Lower leg skin (tissue), 4 donors: ENCODE measurements at regions of chr11 and their contacts with region 1.

Region 1: GRCh38 chr11:44556735-44557409 is 8.6 kb upstream of the CD82 start:
- DNase-seq: peak; percentile 62 to 92
- H3K4me3 ChIP-seq: no peak overlapping the region
- CTCF ChIP-seq: peak in 1 of 3 donors; percentile 72
- POLR2A ChIP-seq: no peak

Region 2: DNA sequence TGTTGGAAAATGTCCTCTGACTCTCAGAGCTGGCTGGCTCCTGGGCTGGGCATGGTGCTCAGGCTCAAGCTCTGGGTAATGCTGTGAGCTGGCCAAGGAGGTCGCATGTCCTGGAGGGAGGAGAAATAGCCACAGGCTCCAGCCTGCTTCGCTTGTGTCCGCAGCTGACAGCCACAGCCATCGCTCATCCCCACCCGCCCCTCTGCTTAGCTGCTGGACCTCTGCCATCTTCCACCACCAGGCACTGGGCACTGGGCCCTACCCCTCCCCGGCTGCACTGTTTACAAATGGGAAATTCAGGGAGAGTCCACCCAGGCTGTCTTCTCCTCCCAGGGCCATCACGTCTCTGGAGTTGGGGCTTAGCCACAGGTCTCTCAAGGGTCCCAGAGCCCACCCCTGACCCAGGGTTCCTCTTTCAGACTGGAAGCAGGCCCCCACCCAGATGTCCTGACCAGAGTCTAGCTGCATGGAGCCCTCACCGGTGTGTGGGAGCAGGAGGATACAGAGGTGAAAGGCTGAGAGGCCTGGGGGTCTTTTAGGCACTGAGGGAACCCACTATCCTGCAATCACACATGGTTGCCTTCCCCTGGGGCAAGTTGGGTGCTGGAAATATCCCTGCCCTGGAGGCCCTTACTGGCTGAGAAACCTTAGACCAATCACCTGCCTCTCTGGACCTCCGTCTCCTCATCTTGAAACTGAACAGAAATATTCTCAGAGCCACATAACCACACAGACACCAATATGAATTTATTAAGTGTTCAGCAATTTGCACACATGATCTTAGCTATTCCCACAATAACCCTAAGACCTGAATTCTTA is 71.2 kb after region 1 on chr11:
- intact Hi-C with region 1: no loop called
- DNase-seq: peak; percentile 47 to 91
- H3K4me3 ChIP-seq: no peak overlapping the region
- CTCF ChIP-seq: no peak
- POLR2A ChIP-seq: no peak

Region 3: DNA sequence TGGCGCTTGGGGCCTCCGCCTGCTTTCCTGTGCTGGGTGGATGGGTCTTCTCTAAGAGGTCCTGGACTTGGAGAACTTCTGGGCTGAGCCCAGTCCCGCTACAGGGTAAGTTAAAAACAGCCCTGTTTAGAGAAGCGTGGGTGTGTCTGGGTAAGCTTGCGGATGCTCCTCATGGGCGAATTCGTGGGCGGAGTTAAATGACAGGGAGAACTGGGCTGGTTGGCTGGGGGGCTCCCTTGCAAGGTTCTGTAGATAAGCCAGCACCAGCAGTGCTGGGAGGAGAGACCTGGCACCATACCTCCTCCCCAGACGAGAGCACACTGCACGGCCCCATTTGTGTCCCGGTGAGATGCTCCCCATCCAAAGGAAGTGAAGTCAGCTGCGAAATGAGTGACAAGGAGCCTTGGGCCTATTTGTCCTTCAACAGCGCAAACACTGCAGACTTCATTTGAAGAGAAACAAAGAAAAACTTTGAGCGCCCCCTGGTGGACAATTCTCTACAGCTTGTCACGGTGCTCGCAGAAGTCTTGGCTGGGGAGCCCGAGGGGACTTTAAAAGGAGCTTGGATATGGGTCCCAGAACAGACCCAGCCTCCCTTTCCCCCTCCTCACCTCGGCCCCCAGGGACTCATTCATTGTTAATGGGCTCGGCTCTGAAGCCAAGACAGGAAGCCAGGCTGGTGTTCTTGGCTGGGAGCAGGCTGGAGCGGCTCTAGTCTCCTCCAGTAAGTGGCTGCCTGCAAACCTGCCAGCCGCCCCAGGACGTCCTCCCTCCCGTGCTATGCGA is 354.4 kb after region 1 on chr11:
- intact Hi-C with region 1: loop called (anchors 10 kb)
- DNase-seq: peak; percentile 88 to 95
- H3K4me3 ChIP-seq: no peak overlapping the region
- CTCF ChIP-seq: peak in 1 of 3 donors; percentile 72
- POLR2A ChIP-seq: no peak